ENCODE measurements at regions of chr10 and their contacts with region 1.

Region 1: DNA sequence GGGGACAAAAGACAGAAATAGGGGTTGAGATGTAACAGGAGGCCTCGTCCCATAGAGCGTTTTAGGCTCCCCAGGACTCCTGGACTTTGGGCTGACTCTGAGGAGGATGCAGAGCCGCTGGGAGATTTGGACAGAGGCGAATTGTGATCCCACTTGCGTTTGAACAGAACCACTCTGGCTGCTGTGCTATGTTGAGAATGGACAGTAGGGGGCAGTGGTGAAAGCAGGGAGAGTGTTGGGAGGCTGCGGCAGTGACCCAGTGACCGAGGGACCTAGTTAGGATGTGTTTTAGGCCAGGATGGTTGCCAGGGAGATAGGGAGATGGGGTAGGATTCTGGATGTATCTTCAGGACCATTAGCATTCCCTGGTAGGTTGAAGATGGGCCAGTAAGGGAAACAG is 271.6 kb downstream of the CCDC3 start:
- DNase-seq: no peak
- ATAC-seq: no peak
- H3K4me3 ChIP-seq: no peak overlapping the region
- H3K27ac ChIP-seq: no peak overlapping the region
- H3K4me1 ChIP-seq: peaks cover 0 to 8% of the 10 kb centered on the region in 2 donors
- H3K27me3 ChIP-seq: no peaks in the 10 kb centered on the region
- CTCF ChIP-seq: peak in 1 of 5 experiments; percentile 37
- POLR2A ChIP-seq: no peak

Region 2: DNA sequence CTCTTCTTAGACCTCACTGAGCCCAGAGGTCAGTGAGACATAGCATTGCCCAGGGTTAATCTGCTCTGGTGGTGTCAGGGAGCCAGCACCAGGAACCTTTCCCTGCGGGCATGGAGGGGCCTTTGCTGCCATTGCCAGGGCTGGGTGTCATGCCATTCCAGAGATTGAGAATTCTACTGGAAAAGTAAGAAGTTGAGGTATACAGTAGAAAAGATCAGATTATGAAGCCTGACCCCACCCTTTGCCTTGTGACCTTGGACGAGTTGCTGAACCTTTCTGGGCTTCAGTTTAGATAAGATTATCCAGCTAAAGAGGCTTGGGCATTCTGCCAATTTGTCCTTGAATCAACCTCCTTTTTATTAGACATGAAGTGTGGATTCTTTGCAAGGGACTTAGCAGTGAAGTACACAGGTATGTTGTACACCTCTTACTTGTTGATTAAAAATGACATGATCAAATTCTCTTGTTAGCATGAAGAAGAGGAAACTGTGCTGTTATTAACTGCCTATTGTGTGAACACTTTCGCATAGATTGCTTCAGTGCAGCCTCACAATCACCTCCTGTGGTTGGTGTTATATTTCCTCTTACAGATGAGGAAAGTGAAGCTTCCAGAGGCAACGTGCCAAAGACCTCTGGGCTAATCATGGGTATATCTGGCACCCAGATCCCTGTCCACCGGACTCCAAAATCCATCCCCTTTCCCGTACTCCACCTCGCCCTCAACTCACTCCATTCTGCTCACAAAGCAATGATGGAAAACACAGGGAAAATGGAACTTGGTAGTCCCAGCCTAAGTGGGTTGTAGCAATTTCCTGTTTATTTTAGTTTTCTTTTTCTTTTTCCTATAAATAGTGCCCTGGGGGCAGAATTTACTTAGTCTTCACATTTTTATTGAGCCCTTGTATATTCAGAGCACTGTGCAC is 229.2 kb before region 1 on chr10:
- in situ Hi-C with region 1: no loop called
- intact Hi-C with region 1: no loop called
- DNase-seq: no peak
- ATAC-seq: no peak
- H3K4me3 ChIP-seq: no peak overlapping the region
- H3K27ac ChIP-seq: no peak overlapping the region
- H3K4me1 ChIP-seq: peaks cover 3 to 7% of the 10 kb centered on the region in 2 donors
- H3K27me3 ChIP-seq: no peaks in the 10 kb centered on the region
- CTCF ChIP-seq: no peak
- POLR2A ChIP-seq: no peak

Region 3: DNA sequence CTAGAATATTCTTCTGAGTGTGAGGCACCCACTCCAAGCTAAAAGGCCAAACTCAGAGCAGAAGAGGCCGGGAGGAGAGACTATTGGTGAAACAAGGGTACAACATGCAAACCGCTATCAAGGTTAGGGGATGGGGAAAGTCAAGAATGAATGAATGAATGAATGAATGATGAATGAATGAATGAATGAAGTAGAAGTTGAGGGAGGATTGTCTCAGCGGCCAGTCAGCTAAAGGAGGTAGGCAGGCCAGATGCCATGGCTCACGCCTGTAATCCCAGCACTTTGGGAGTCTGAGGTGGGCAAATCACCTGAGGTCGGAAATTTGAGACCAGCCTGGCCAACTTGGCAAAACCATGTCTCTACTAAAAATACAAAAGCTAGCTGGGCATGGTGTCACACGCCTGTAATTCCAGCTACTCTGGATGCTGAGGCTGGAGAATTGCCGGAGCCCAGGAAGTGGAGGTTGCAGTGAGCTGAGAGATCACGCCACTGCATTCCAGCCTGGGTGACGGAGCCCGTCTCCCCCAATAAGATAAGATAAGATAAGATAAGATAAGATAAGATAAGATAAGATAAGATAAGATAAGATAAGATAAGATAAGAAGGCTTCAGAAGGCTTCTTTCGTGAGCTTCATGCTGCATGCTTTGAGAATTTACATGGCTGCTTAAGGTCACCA is 20.8 kb after region 1 on chr10:
- in situ Hi-C with region 1: no loop called
- intact Hi-C with region 1: loop called (anchors 1 kb)
- DNase-seq: peak; percentile 29 to 64
- ATAC-seq: peak; percentile 49 to 55
- H3K4me3 ChIP-seq: no peak overlapping the region
- H3K27ac ChIP-seq: peak overlapping the region; percentile 73 to 88 (median 76)
- H3K4me1 ChIP-seq: peaks cover 5 to 11% of the 10 kb centered on the region in 2 donors
- H3K27me3 ChIP-seq: no peaks in the 10 kb centered on the region
- CTCF ChIP-seq: peak in 1 of 5 experiments; percentile 7
- POLR2A ChIP-seq: no peak

Region 4: GRCh38 chr10:12954866-12955265 is 225.0 kb after region 1 on chr10:
- in situ Hi-C with region 1: no loop called
- intact Hi-C with region 1: loop called (anchors 5 kb)
- DNase-seq: no peak
- ATAC-seq: peak in 1 of 2 donors; percentile 36
- H3K4me3 ChIP-seq: no peak overlapping the region
- H3K27ac ChIP-seq: peak overlapping the region in 2 of 4 donors; percentile 44 to 59
- H3K4me1 ChIP-seq: no peaks in the 10 kb centered on the region
- H3K27me3 ChIP-seq: no peaks in the 10 kb centered on the region
- CTCF ChIP-seq: no peak
- POLR2A ChIP-seq: no peak